K562 (cell line): ENCODE measurements at regions of chr17 and their contacts with region 1.

Region 1: GRCh38 chr17:75393523-75394331 is 11.8 kb downstream of the GRB2 start:
- DNase-seq: peak; percentile 97 to 98 (median 98)
- ATAC-seq: peak; percentile 98
- H3K4me3 ChIP-seq: peak overlapping the region; percentile 66
- H3K27ac ChIP-seq: peak overlapping the region; percentile 63
- H3K4me1 ChIP-seq: peaks cover 5 to 13% of the 10 kb centered on the region in 2 experiments; a peak in 4 of 5 replicates
- H3K27me3 ChIP-seq: no peaks in the 10 kb centered on the region
- CTCF ChIP-seq: 0 out of 6 replicates have a peak, but pooled peaks of 2 of the 3 experiments have one; percentile 2 to 15
- EP300 ChIP-seq: no peak
- POLR2A ChIP-seq: peak; percentile 61
- RAD21 ChIP-seq: no peak

Region 2: GRCh38 chr17:75182569-75183450 is 210.9 kb before region 1 on chr17 and contains the start of gene SUMO2:
- CTCF ChIA-PET with region 1: no interaction called
- POLR2A ChIA-PET with region 1: no interaction called
- in situ Hi-C with region 1: no loop called
- intact Hi-C with region 1: no loop called
- DNase-seq: peak; percentile 98 to 99 (median 99)
- ATAC-seq: peak; percentile 92
- H3K4me3 ChIP-seq: peak within 1 kb of the TSS; percentile 100
- H3K27ac ChIP-seq: peak within 1 kb of the TSS; percentile 100
- H3K4me1 ChIP-seq: peaks cover 18 to 26% of the 10 kb centered on the region in 2 experiments; a peak in 4 of 5 replicates
- H3K27me3 ChIP-seq: no peaks in the 10 kb centered on the region
- CTCF ChIP-seq: peak; percentile 34 to 38 (median 35); a peak in 2 of 6 replicates
- EP300 ChIP-seq: no peak
- POLR2A ChIP-seq: peak; percentile 82
- RAD21 ChIP-seq: no peak; a peak in 1 of 4 replicates
- polyA plus RNA-seq, gene SUMO2: 570 to 733 TPM

Region 3: DNA sequence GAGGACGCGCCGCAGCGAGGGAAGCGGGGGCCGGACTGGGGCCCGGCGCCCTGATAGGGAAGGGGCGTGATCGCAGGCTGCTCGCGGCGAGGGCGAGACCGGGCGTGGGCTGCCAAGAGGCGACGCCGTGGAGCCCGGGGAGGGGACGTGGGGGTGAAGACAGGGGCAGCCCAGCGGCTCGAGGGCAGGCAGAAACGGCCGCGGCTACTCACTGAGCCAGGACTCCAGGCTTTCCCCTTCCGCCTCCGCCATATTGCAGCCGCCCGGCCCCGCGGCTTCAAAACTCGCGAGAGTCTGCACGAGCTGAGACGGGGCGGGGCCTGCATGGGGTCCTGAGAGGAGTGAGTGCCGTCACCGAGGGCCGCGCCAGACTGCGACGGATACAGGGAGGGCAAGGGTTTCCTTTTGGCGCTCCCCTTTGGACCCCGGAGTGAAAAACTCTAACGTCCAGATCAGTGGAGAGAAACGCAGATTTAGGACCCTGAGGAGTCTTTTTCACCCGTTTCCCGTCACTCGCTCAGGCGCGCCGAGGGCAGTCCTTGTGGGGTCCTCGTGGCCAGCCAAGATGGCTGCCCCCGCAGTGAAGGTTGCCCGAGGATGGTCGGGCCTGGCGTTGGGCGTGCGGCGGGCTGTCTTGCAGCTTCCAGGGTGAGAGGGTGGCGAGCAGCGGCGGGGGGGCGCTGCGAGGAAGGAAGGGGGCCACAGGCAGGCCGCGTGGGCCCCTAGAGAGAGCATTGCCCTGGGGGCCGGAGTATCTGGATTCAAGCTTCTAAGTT is 132.2 kb before region 1 on chr17 and contains the starts of genes GGA3 and MRPS7:
- CTCF ChIA-PET with region 1: no interaction called
- POLR2A ChIA-PET with region 1: interaction called, 10 read pairs
- in situ Hi-C with region 1: no loop called
- intact Hi-C with region 1: no loop called
- DNase-seq: peak; percentile 86 to 97 (median 94)
- ATAC-seq: peak; percentile 96
- H3K4me3 ChIP-seq: peak within 1 kb of the TSS; percentile 91
- H3K27ac ChIP-seq: peak within 1 kb of the TSS; percentile 93
- H3K4me1 ChIP-seq: peaks cover 20 to 23% of the 10 kb centered on the region in 2 experiments; a peak in 4 of 5 replicates
- H3K27me3 ChIP-seq: no peaks in the 10 kb centered on the region
- CTCF ChIP-seq: peak in 1 of 3 experiments; percentile 14; a peak in 2 of 6 replicates
- EP300 ChIP-seq: no peak
- POLR2A ChIP-seq: peak; percentile 95
- RAD21 ChIP-seq: 0 out of 4 replicates have a peak, but pooled peaks have one; percentile 2 to 16
- polyA plus RNA-seq, gene GGA3: 5.7 to 6.3 TPM
- polyA plus RNA-seq, gene MRPS7: 236 to 244 TPM

Region 4: DNA sequence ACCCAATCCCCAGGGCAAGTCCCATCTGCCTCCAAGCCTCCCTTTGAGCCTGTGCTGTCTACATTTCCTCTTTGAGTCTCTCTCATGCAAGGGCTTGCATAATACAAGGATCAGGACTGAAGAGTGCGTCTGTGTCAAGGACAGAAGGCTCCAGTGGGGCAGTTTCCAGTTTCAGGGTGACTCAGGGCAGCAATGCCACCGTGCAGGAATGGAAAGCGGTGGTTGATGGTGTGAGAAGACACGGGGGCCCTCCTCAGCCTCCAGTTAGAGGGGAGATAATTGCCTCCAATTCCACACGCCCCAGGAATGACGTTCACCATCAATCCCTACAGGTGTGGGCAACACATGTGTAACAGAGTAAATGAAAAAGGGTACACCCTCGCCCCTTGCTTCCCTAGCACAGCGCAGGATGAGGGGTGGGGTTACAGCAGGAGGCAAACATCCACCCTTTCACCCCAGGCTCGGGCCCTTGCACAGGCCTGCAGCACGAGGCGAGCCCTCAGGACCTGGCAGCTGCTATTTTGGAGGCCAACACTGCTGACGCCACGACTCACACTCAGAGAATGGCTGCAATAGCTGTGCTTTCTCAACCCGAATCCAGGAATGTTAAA is 79.7 kb before region 1 on chr17:
- CTCF ChIA-PET with region 1: no interaction called
- POLR2A ChIA-PET with region 1: interaction called, 11 read pairs
- in situ Hi-C with region 1: no loop called
- intact Hi-C with region 1: no loop called
- DNase-seq: no peak
- ATAC-seq: no peak
- H3K4me3 ChIP-seq: no peak overlapping the region
- H3K27ac ChIP-seq: no peak overlapping the region
- H3K4me1 ChIP-seq: peaks cover 0 to 19% of the 10 kb centered on the region in 2 experiments; a peak in 4 of 5 replicates
- H3K27me3 ChIP-seq: no peaks in the 10 kb centered on the region
- CTCF ChIP-seq: no peak
- EP300 ChIP-seq: no peak
- POLR2A ChIP-seq: no peak
- RAD21 ChIP-seq: no peak

Region 5: DNA sequence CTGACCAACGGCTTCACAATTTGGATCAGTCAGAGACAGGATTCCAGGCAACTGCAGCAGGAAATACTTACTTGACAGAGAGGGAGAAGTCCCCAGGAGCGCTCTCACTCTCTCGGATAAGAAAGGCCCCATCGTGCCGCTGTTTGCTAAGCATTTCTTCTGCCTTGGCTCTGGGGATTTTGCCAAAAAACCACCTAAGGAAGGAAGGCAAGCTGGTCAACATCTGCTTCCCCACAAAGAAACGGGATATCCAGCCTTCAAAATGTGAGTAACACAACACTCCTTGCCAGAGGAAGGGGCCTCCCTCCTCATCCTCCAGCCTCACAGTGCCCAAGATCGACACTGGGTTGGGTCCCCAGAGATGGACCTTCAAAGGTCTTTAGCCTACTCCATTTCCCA is 67.9 kb before region 1 on chr17:
- CTCF ChIA-PET with region 1: no interaction called
- POLR2A ChIA-PET with region 1: interaction called, 12 read pairs
- in situ Hi-C with region 1: no loop called
- intact Hi-C with region 1: no loop called
- DNase-seq: no peak
- ATAC-seq: no peak; the same call in 2 of the 3 replicates
- H3K4me3 ChIP-seq: no peak overlapping the region
- H3K27ac ChIP-seq: peak overlapping the region; percentile 65
- H3K4me1 ChIP-seq: peaks cover 15 to 20% of the 10 kb centered on the region in 2 experiments
- H3K27me3 ChIP-seq: no peaks in the 10 kb centered on the region
- CTCF ChIP-seq: no peak
- EP300 ChIP-seq: no peak
- POLR2A ChIP-seq: no peak
- RAD21 ChIP-seq: no peak

Region 6: GRCh38 chr17:75352079-75352569 is 41.6 kb before region 1 on chr17:
- CTCF ChIA-PET with region 1: no interaction called
- POLR2A ChIA-PET with region 1: interaction called, 13 read pairs
- in situ Hi-C with region 1: no loop called
- intact Hi-C with region 1: no loop called
- DNase-seq: peak in 2 of 4 experiments; percentile 43 to 74
- ATAC-seq: peak; percentile 88
- H3K4me3 ChIP-seq: no peak overlapping the region
- H3K27ac ChIP-seq: peak overlapping the region; percentile 59
- H3K4me1 ChIP-seq: peaks cover 28 to 45% of the 10 kb centered on the region in 2 experiments
- H3K27me3 ChIP-seq: no peaks in the 10 kb centered on the region
- CTCF ChIP-seq: no peak
- EP300 ChIP-seq: no peak
- POLR2A ChIP-seq: no peak
- RAD21 ChIP-seq: no peak

Region 7: DNA sequence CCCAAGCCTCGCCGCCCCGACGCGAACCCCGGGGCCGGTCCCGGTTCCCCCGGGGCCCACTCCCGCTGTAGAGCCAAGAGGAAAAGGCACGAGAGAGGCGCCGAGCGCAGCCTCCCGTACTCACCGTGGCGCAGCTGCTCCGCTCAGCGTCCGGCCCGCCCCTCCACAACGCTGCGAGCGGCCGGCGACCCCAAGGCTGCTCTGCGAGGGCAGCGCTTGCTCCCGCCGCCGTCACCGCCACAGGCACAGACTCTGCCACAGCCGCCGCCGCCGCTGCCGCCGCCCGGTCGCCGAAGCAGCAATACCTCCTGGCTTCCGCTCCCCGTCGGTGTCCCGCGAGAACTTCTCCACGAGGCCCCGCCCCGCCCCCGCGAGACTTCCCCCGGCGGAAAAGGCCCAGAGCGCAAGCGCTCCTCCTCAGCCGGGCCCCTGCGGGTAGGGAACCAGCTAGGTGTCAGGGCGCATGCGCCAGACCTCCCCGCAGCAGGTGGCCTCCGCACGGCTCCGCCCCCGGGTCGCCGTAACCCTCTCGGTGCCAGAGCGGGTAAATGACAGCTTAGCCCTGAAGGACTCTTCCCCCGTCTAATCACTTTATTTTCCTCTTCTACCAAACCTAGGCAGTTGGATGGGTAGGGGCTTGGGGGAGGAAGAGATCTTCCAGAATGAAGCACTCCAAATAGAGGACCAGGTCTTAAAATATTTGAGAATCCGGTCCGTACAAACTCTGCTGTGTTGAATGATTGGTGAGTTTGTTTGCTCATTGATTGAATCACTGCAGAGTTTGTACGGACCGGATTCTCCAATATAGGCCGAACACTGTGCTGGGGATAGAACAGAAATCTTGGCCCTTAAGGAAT is 11.9 kb after region 1 on chr17 and contains the start of gene GRB2:
- CTCF ChIA-PET with region 1: no interaction called
- POLR2A ChIA-PET with region 1: interaction called, 17 read pairs
- in situ Hi-C with region 1: no loop called
- intact Hi-C with region 1: no loop called
- DNase-seq: peak; percentile 98 to 100 (median 100)
- ATAC-seq: peak; percentile 95
- H3K4me3 ChIP-seq: peak within 1 kb of the TSS; percentile 90
- H3K27ac ChIP-seq: peak within 1 kb of the TSS; percentile 84
- H3K4me1 ChIP-seq: peaks cover 12 to 15% of the 10 kb centered on the region in 2 experiments; a peak in 3 of 5 replicates
- H3K27me3 ChIP-seq: no peaks in the 10 kb centered on the region; a peak in 1 of 5 replicates
- CTCF ChIP-seq: no peak
- EP300 ChIP-seq: no peak
- POLR2A ChIP-seq: peak; percentile 90
- RAD21 ChIP-seq: no peak
- polyA plus RNA-seq, gene GRB2: 57.2 to 69.1 TPM

Region 8: GRCh38 chr17:75430159-75430974 is 36.6 kb after region 1 on chr17:
- CTCF ChIA-PET with region 1: no interaction called
- POLR2A ChIA-PET with region 1: no interaction called
- in situ Hi-C with region 1: no loop called
- intact Hi-C with region 1: no loop called
- DNase-seq: peak in 2 of 4 experiments; percentile 12 to 20
- ATAC-seq: peak; percentile 32; the same call in 1 of the 3 replicates
- H3K4me3 ChIP-seq: no peak overlapping the region
- H3K27ac ChIP-seq: no peak overlapping the region
- H3K4me1 ChIP-seq: peaks cover 0 to 9% of the 10 kb centered on the region in 2 experiments; a peak in 4 of 5 replicates
- H3K27me3 ChIP-seq: peaks cover 6 to 7% of the 10 kb centered on the region in 2 experiments; a peak in 4 of 5 replicates
- CTCF ChIP-seq: no peak
- EP300 ChIP-seq: no peak
- POLR2A ChIP-seq: no peak
- RAD21 ChIP-seq: no peak